Posterior vena cava (tissue), 2 donors: ENCODE measurements at regions of chr12 and their contacts with region 1.

Region 1: DNA sequence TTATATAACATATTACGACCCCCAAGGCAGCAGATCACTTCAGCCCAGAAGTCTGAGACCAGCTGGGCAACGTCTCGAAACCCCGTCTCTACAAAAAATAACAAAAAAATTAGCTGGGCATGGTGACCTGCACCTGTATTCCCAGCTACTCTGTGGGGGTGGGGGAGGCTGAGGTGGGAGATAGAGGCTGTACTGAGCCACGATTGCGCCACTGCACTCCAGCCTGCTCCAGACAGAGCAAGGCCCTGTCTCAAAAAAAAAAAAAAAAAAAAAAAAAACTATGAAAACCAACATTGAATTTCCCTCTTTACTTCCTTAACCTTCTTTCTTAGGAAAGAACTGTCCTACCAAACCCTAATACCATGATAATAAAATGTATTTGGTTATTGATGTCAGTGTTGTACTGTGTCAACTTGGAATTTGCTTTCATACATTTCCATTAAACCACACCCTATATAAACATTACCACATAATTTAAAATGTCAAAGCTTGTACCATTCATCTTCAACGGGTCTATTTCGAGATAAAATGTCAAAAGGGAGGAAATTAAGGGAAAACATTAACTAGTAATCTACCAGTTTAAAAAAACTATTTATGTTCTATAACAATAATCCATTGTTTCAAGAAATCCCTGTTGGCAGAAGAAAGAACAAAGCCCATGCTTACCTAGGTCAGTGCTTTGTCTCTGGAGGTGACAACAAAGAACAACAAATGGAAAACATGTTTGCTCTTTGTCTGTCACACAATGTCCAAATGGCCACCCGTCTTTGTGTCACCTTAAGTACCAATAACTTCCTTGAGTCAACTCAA is 17.4 kb downstream of the GALNT4 start:
- DNase-seq: no peak

Region 2: GRCh38 chr12:89542912-89543592 is 35.8 kb after region 1 on chr12:
- intact Hi-C with region 1: no loop called
- DNase-seq: no peak

Region 3: GRCh38 chr12:89571491-89572195 is 64.4 kb after region 1 on chr12:
- intact Hi-C with region 1: loop called in 1 of 2 experiments (anchors 2 kb)
- DNase-seq: no peak